ENCODE measurements at regions of chr16 and their contacts with region 1.

Region 1: GRCh38 chr16:242281-242680 is 7.7 kb downstream of the FAM234A start:
- DNase-seq: no peak
- H3K4me3 ChIP-seq: no peak overlapping the region
- H3K4me3 Mint-ChIP-seq: no peak overlapping the region
- H3K27ac ChIP-seq: no peak overlapping the region
- H3K27ac Mint-ChIP-seq: peak overlapping the region in 1 of 8 donors; percentile 17
- H3K4me1 ChIP-seq: no peaks in the 10 kb centered on the region
- H3K4me1 Mint-ChIP-seq: peaks cover 9 to 18% (median 15%) of the 10 kb centered on the region in 3 donors
- H3K27me3 ChIP-seq: no peaks in the 10 kb centered on the region
- H3K27me3 Mint-ChIP-seq: no peaks in the 10 kb centered on the region

Region 2: GRCh38 chr16:212999-213398 is 29.3 kb before region 1 on chr16:
- CTCF ChIA-PET with region 1: no interaction called
- POLR2A ChIA-PET with region 1: interaction called, 10 read pairs
- DNase-seq: no peak
- H3K4me3 ChIP-seq: no peak overlapping the region
- H3K4me3 Mint-ChIP-seq: no peak overlapping the region
- H3K27ac ChIP-seq: no peak overlapping the region
- H3K27ac Mint-ChIP-seq: peak overlapping the region in 5 of 8 donors; percentile 23 to 74 (median 33)
- H3K4me1 ChIP-seq: no peaks in the 10 kb centered on the region
- H3K4me1 Mint-ChIP-seq: peaks cover 0 to 22% (median 7%) of the 10 kb centered on the region in 3 donors
- H3K27me3 ChIP-seq: no peaks in the 10 kb centered on the region
- H3K27me3 Mint-ChIP-seq: no peaks in the 10 kb centered on the region

Region 3: GRCh38 chr16:228818-229730 is 13.2 kb before region 1 on chr16 and contains the start of gene LUC7L:
- CTCF ChIA-PET with region 1: no interaction called
- POLR2A ChIA-PET with region 1: no interaction called
- DNase-seq: peak; percentile 78 to 90 (median 84)
- H3K4me3 ChIP-seq: peak within 1 kb of the TSS; percentile 78
- H3K4me3 Mint-ChIP-seq: peak within 1 kb of the TSS; percentile 86 to 95 (median 89)
- H3K27ac ChIP-seq: peak within 1 kb of the TSS; percentile 95
- H3K27ac Mint-ChIP-seq: peak within 1 kb of the TSS; percentile 87 to 97 (median 96)
- H3K4me1 ChIP-seq: peaks cover 25% of the 10 kb centered on the region
- H3K4me1 Mint-ChIP-seq: peaks cover 29 to 39% (median 39%) of the 10 kb centered on the region in 3 donors
- H3K27me3 ChIP-seq: no peaks in the 10 kb centered on the region
- H3K27me3 Mint-ChIP-seq: no peaks in the 10 kb centered on the region
- total RNA-seq, gene LUC7L: 78.5 to 80.0 TPM

Measured in CD8-positive, alpha-beta memory T cell (primary cell).